ENCODE measurements at regions of chr12 and their contacts with region 1.

Region 1: GRCh38 chr12:57462251-57462911 is 2.8 kb downstream of the GLI1 start:
- DNase-seq: peak; percentile 82
- ATAC-seq: peak; percentile 72
- H3K4me3 ChIP-seq: peak overlapping the region; percentile 56
- H3K27ac ChIP-seq: peak overlapping the region; percentile 67
- H3K4me1 ChIP-seq: peaks cover 7% of the 10 kb centered on the region
- H3K27me3 ChIP-seq: 0 out of 2 replicates have a peak, but pooled peaks cover 2% of the 10 kb centered on the region
- CTCF ChIP-seq: peak; percentile 94
- POLR2A ChIP-seq: no peak
- RAD21 ChIP-seq: peak; percentile 79

Region 2: GRCh38 chr12:56751712-56752598 is 710.4 kb before region 1 on chr12 and contains the start of gene PRIM1:
- CTCF ChIA-PET with region 1: no interaction called
- POLR2A ChIA-PET with region 1: no interaction called
- dilution Hi-C with region 1: no loop called
- in situ Hi-C with region 1: no loop called
- intact Hi-C with region 1: no loop called
- DNase-seq: peak; percentile 66
- ATAC-seq: peak; percentile 95
- H3K4me3 ChIP-seq: peak within 1 kb of the TSS; percentile 82
- H3K27ac ChIP-seq: peak within 1 kb of the TSS; percentile 68
- H3K4me1 ChIP-seq: no peaks in the 10 kb centered on the region
- H3K27me3 ChIP-seq: no peaks in the 10 kb centered on the region
- CTCF ChIP-seq: no peak
- POLR2A ChIP-seq: no peak
- RAD21 ChIP-seq: no peak
- total RNA-seq, gene PRIM1: 12.0 and 15.3 TPM in 2 replicates

Region 3: GRCh38 chr12:57483481-57483880 is 21.1 kb after region 1 on chr12:
- CTCF ChIA-PET with region 1: interaction called, 4 read pairs
- POLR2A ChIA-PET with region 1: no interaction called
- dilution Hi-C with region 1: no loop called
- in situ Hi-C with region 1: no loop called
- intact Hi-C with region 1: loop called (anchors 1 kb)
- DNase-seq: peak; percentile 69
- ATAC-seq: peak; percentile 60
- H3K4me3 ChIP-seq: no peak overlapping the region
- H3K27ac ChIP-seq: peak overlapping the region; percentile 42; the same call in 1 of the 2 replicates
- H3K4me1 ChIP-seq: peaks cover 4% of the 10 kb centered on the region
- H3K27me3 ChIP-seq: peaks cover 11% of the 10 kb centered on the region; the same call in 1 of the 2 replicates
- CTCF ChIP-seq: no peak
- POLR2A ChIP-seq: no peak
- RAD21 ChIP-seq: no peak

Region 4: GRCh38 chr12:57621497-57622292 is 159.3 kb after region 1 on chr12:
- CTCF ChIA-PET with region 1: no interaction called
- POLR2A ChIA-PET with region 1: no interaction called
- dilution Hi-C with region 1: no loop called
- in situ Hi-C with region 1: no loop called
- intact Hi-C with region 1: loop called (anchors 5 kb)
- DNase-seq: peak; percentile 11
- ATAC-seq: peak; percentile 88
- H3K4me3 ChIP-seq: peak overlapping the region; percentile 34
- H3K27ac ChIP-seq: no peak overlapping the region
- H3K4me1 ChIP-seq: no peaks in the 10 kb centered on the region
- H3K27me3 ChIP-seq: peaks cover 56% of the 10 kb centered on the region
- CTCF ChIP-seq: peak; percentile 80
- POLR2A ChIP-seq: no peak
- RAD21 ChIP-seq: peak; percentile 63

Region 5: DNA sequence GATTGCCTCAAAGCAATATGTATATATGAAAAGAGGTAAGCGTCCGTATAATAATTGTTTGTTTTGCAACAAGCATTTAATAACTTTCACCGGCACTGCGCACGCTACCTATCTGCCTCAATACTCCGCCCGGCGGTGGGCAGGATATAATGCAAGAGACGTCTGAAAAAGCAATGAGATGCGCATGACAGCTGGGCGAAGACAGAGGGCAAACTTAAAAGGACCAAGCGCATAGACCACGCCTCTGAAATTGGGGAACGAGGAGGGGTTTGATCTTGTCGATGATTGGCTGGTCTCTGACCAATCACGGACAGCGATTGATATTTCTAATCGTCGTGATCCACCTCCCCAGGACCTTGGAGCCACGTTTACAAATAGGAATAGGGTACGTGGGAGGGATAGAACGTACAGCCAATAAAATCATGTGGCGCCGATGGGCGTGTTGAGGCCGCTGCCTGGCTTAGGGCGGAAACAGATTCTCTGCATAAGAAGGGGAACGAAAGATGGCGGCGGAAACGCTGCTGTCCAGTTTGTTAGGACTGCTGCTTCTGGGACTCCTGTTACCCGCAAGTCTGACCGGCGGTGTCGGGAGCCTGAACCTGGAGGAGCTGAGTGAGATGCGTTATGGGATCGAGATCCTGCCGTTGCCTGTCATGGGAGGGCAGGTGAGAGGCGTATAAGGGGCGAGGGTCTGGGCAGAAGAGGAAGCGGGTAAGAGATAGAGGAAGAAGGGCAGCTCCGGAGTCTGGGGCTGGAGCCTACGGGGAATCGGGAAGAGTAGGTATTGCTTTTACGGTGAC is 231.5 kb after region 1 on chr12 and contains the start of gene OS9:
- CTCF ChIA-PET with region 1: no interaction called
- POLR2A ChIA-PET with region 1: no interaction called
- dilution Hi-C with region 1: no loop called
- in situ Hi-C with region 1: no loop called
- intact Hi-C with region 1: loop called (anchors 5 kb)
- DNase-seq: peak; percentile 100
- ATAC-seq: peak; percentile 97
- H3K4me3 ChIP-seq: peak within 1 kb of the TSS; percentile 73
- H3K27ac ChIP-seq: peak within 1 kb of the TSS; percentile 75
- H3K4me1 ChIP-seq: 0 out of 2 replicates have a peak, but pooled peaks cover 3% of the 10 kb centered on the region
- H3K27me3 ChIP-seq: no peaks in the 10 kb centered on the region
- CTCF ChIP-seq: peak; percentile 90
- POLR2A ChIP-seq: peak; percentile 88
- RAD21 ChIP-seq: peak; percentile 59
- total RNA-seq, gene OS9: 159 and 182 TPM in 2 replicates